GM10248 (cell line): ENCODE measurements at regions of chr9 and their contacts with region 1.

Region 1: DNA sequence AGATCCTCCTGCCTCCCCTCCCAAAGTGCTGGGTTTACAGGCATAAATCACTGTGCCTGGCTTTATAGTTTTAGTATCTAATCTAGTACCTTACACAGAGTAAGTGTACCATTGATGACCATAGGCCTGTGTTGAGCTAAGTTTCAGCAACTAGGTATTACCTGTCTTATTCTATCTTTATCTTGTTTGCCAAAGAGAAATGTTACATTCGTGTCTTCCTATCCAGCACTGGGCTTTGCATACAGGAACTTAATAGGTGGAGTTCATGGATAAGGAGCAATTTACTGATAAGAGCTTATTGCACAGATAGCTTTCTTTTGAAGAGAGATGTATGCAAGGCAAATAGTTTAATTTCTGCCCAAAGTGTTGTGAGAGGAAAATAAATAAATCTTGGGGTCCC is 30.5 kb downstream of the TXNDC8 start:
- DNase-seq: no peak
- CTCF ChIP-seq: no peak

Region 2: GRCh38 chr9:110125207-110125751 is 181.9 kb before region 1 on chr9:
- CTCF ChIA-PET with region 1: no interaction called
- POLR2A ChIA-PET with region 1: no interaction called
- DNase-seq: no peak
- CTCF ChIP-seq: no peak

Region 3: DNA sequence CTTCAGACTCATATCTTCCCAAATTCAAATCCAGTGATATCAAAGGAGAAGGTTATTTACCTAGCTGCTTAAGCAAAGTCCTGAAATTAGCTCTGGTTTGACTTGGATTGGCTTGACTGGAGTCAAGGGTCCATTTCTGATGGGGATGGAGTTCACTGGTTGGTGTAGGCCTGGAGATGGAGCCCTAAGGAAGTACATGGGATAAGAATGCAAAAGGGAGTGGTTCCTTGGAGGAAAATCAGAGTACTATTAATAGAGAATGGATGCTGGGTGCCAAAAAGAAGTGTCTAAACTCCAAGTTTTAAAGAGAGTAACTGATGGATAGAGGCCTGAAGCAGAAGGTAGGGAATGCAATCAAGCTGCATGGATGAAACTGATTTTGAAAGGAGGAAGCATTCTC is 16.6 kb after region 1 on chr9:
- CTCF ChIA-PET with region 1: interaction called, 10 read pairs
- POLR2A ChIA-PET with region 1: no interaction called
- DNase-seq: no peak
- CTCF ChIP-seq: no peak